Activated CD4-positive, alpha-beta T cell treated with anti-CD3 and anti-CD28 coated beads, Interleukin-2, amount 10 ng/mL, durations not matched to agents 24 days and 14 days (primary cell): ENCODE measurements at regions of chr16 and their contacts with region 1.

Region 1: DNA sequence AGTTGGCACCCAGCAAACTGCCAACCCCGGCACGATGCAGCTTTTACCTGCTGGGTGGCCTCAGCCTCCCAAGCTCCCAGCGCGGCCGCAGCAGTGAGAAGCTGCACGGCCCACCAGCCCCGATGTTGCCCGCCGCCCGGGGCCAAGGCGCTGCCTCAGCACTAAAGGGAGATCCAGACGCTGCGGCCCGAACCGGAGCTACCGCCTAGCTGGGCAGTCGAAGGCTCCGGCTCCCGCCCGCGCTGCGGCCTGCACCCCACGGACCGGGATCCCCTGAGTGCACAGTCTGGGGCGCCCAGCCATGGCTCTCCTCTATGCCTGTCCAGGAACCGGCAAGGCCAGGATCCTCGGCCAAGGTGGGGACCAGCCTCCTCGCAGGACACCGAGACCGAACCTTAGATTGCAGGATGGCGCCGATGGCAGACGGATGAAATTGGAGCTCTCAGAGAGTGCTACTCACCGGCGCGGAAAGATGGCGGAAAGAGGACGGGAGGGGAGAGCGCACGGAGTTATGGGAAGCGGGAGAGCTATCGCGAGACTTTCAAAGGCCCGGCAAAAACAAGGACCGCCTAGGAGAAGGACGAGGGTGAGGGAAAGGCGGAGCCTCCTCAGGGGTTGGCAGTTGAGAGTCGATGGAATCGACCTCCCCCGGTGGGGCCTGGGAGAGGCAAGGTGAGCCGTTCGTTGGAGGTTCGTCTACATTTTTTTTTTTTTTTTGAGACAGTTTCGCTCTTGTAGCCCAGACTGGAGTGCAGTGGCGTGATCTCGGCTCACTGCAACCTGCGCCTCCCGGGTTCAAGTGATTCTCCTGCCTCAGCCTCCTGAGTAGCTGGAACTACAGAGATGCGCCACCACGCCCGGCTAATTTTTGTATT is at the start of gene RPS15A:
- DNase-seq: peak; percentile 98
- H3K4me3 Mint-ChIP-seq: peak within 1 kb of the TSS; percentile 99
- H3K27ac Mint-ChIP-seq: peak within 1 kb of the TSS; percentile 97
- H3K4me1 Mint-ChIP-seq: peaks cover 44% of the 10 kb centered on the region
- H3K27me3 Mint-ChIP-seq: peaks cover 2% of the 10 kb centered on the region
- total RNA-seq, gene RPS15A: 1,857 and 1,884 TPM in 2 replicates

Region 2: GRCh38 chr16:18932243-18932981 is 142.3 kb after region 1 on chr16:
- intact Hi-C with region 1: loop called (anchors 2 kb)
- DNase-seq: no peak
- H3K4me3 Mint-ChIP-seq: no peak overlapping the region
- H3K27ac Mint-ChIP-seq: no peak overlapping the region
- H3K4me1 Mint-ChIP-seq: peaks cover 10% of the 10 kb centered on the region
- H3K27me3 Mint-ChIP-seq: no peaks in the 10 kb centered on the region